ENCODE measurements at regions of chr11 and their contacts with region 1.

Region 1: GRCh38 chr11:40306938-40307548 is 1152.4 kb downstream of the LRRC4C start:
- DNase-seq: peak; percentile 63
- ATAC-seq: peak; percentile 87
- H3K4me3 ChIP-seq: no peak overlapping the region
- H3K27ac ChIP-seq: no peak overlapping the region
- H3K4me1 ChIP-seq: no peaks in the 10 kb centered on the region
- H3K27me3 ChIP-seq: no peaks in the 10 kb centered on the region
- CTCF ChIP-seq: peak; percentile 86
- POLR2A ChIP-seq: no peak
- RAD21 ChIP-seq: peak; percentile 96

Region 2: DNA sequence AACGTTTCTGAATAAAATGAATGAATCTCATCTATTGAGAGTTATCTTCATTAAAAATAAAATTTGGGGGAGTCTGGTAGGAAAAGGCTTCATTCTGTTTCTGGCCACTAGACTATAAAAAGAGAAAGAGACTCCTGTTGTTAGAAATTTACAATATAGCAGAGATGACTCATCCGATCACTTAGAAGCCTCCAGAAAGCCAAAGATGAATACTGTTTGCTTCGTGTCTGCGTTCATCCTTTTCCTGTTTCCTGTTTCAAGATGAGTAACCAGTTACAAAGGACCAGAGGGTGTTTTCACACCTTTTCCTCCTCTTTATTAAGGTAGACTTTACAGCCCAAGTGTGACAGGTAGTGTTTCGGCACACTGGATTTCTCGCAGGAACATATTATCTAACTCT is 31.7 kb after region 1 on chr11:
- CTCF ChIA-PET with region 1: no interaction called
- POLR2A ChIA-PET with region 1: no interaction called
- dilution Hi-C with region 1: no loop called
- in situ Hi-C with region 1: no loop called
- intact Hi-C with region 1: no loop called
- DNase-seq: peak; percentile 80
- ATAC-seq: peak; percentile 73
- H3K4me3 ChIP-seq: no peak overlapping the region
- H3K27ac ChIP-seq: no peak overlapping the region
- H3K4me1 ChIP-seq: peaks cover 5% of the 10 kb centered on the region; the same call in 1 of the 2 replicates
- H3K27me3 ChIP-seq: no peaks in the 10 kb centered on the region
- CTCF ChIP-seq: 0 out of 2 replicates have a peak, but pooled peaks have one; percentile 12
- POLR2A ChIP-seq: no peak
- RAD21 ChIP-seq: no peak

Region 3: DNA sequence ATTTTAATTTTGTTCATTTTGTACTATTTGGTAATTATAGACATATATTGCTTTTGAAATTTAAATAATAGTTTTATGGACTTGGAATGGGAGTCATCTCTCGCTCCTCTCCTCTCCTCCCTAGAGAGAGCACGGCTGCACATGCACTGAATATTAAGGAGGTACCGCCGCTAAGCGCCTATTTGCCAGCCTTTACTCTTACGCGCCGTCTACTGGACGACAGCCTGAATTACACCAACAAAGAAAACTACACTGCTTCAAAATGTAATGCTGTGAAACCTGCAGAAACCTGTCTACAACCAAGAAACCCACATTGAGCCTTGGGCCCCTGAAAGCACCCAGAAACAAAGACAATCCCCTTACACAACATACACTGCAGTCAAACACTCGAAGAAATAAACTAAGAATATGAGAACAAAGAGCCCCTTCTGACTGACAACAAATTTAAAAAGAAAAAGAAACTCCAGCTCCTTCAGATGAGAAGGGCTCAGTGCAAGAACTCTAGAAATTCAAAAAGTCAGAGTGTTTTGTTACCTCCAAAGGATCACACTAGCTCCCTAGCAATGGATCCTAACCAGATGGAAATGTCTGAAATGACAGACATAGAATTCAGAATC is 415.2 kb after region 1 on chr11:
- CTCF ChIA-PET with region 1: no interaction called
- POLR2A ChIA-PET with region 1: no interaction called
- dilution Hi-C with region 1: no loop called
- in situ Hi-C with region 1: no loop called
- intact Hi-C with region 1: loop called (anchors 2 kb)
- DNase-seq: peak; percentile 0
- ATAC-seq: no peak
- H3K4me3 ChIP-seq: no peak overlapping the region
- H3K27ac ChIP-seq: no peak overlapping the region
- H3K4me1 ChIP-seq: no peaks in the 10 kb centered on the region
- H3K27me3 ChIP-seq: no peaks in the 10 kb centered on the region
- CTCF ChIP-seq: peak; percentile 31
- POLR2A ChIP-seq: no peak
- RAD21 ChIP-seq: peak; percentile 34; the same call in 1 of the 2 replicates

Region 4: GRCh38 chr11:41201156-41201555 is 894.1 kb after region 1 on chr11:
- CTCF ChIA-PET with region 1: interaction called, 5 read pairs
- POLR2A ChIA-PET with region 1: no interaction called
- dilution Hi-C with region 1: no loop called
- in situ Hi-C with region 1: loop called (anchors 25 kb)
- intact Hi-C with region 1: loop called (anchors 1 kb)
- DNase-seq: peak; percentile 0
- ATAC-seq: no peak
- H3K4me3 ChIP-seq: no peak overlapping the region
- H3K27ac ChIP-seq: no peak overlapping the region
- H3K4me1 ChIP-seq: no peaks in the 10 kb centered on the region
- H3K27me3 ChIP-seq: no peaks in the 10 kb centered on the region
- CTCF ChIP-seq: peak; percentile 39
- POLR2A ChIP-seq: no peak
- RAD21 ChIP-seq: peak; percentile 51

Region 5: GRCh38 chr11:41895081-41895480 is 1588.0 kb after region 1 on chr11:
- CTCF ChIA-PET with region 1: no interaction called
- POLR2A ChIA-PET with region 1: no interaction called
- dilution Hi-C with region 1: no loop called
- in situ Hi-C with region 1: no loop called
- intact Hi-C with region 1: loop called (anchors 5 kb)
- DNase-seq: no peak
- ATAC-seq: no peak
- H3K4me3 ChIP-seq: no peak overlapping the region
- H3K27ac ChIP-seq: no peak overlapping the region
- H3K4me1 ChIP-seq: no peaks in the 10 kb centered on the region
- H3K27me3 ChIP-seq: no peaks in the 10 kb centered on the region
- CTCF ChIP-seq: no peak
- POLR2A ChIP-seq: no peak
- RAD21 ChIP-seq: no peak